Dorsolateral prefrontal cortex (tissue), 120 donors: ENCODE measurements at regions of chrX and their contacts with region 1.

Region 1: DNA sequence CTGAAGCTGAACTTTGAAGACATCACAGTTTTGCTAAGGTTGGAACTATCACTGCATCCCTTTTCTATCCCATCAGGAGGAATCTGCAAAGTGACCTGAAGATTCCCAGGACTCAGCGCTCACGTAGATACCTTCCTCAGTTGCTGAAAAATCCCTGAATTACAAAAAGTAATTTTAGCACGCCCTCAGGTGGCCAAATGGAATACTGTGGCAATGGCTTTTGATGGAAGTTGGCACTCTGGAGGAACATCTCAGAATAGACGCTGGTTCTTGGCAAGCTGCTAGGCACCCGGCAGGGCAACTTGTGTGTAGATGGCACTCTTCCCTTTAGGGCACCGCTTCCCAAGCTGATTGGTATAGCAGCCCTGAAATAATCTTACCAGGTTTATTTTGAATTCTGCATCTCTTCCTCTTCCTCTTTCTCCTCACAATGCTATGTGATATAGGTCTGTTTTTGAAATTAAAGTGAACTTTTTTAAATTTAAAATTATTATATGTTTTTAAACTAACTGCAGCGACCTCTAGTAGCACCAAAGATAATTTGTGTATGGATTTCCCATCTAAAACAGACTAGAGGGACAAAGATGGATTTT is 16.3 kb upstream of the ESX1 start:
- DNase-seq: peak in 9 of 10 donors; percentile 41 to 67 (median 56)
- H3K4me3 ChIP-seq: peak overlapping the region in 40 of 59 donors; percentile 5 to 54 (median 34)
- H3K27ac ChIP-seq: no peak overlapping the region
- H3K27me3 ChIP-seq: peaks cover 0 to 79% (median 29%) of the 10 kb centered on the region in 45 donors
- CTCF ChIP-seq: peak; percentile 15 to 77 (median 64)

Region 2: DNA sequence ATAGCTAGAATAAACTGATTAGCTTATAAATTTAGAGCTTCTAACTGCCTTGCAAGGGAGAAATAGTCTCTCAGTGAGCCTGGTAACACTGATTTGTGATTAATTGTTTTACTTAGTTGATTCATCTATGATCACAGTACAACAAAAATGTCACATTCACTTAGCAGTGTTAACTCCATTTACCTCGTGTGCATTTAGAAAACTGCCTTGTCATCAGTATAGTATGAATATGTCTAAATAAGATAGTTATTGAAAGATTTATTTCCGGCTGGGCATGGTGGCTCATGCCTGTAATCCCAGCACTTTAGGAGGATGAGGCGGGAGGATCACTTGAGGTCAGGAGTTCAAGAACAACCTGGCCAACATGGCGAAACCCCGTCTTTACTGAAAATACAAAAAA is 65.5 kb before region 1 on chrX:
- intact Hi-C with region 1: loop called in 1 of 2 experiments (anchors 10 kb)
- DNase-seq: no peak
- H3K4me3 ChIP-seq: no peak overlapping the region
- H3K27ac ChIP-seq: no peak overlapping the region
- H3K27me3 ChIP-seq: peaks cover 0 to 74% (median 19%) of the 10 kb centered on the region in 45 donors
- CTCF ChIP-seq: no peak